Sciatic nerve (tissue), 2 donors: ENCODE measurements at regions of chr3 and their contacts with region 1.

Region 1: DNA sequence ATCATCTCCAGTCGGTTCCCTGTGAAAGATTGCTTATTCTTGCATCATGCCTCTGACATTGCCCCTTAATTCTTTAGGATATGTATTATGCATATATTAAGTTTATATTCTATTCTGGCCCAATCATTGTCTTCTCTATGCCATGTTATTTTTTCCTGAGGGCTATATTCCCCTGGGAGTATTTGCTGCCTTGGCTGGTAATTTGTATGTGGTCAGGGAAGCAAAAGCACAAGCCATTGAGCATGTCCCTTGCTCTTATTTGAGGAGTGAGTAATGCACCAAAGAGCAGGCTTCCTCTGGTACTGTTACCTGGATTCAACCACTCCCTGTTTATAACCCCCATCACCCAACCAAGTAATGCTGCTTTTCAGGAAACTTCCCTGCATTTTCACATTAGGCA is 36.3 kb downstream of the STAC start:
- DNase-seq: no peak
- ATAC-seq: no peak

Region 2: GRCh38 chr3:36303094-36303685 is 113.4 kb before region 1 on chr3:
- intact Hi-C with region 1: loop called (anchors 5 kb)
- DNase-seq: no peak
- ATAC-seq: no peak

Region 3: GRCh38 chr3:36868614-36869436 is 452.2 kb after region 1 on chr3:
- intact Hi-C with region 1: no loop called
- DNase-seq: peak; percentile 68
- ATAC-seq: peak; percentile 89